ENCODE measurements at regions of chr17 and their contacts with region 1.

Region 1: DNA sequence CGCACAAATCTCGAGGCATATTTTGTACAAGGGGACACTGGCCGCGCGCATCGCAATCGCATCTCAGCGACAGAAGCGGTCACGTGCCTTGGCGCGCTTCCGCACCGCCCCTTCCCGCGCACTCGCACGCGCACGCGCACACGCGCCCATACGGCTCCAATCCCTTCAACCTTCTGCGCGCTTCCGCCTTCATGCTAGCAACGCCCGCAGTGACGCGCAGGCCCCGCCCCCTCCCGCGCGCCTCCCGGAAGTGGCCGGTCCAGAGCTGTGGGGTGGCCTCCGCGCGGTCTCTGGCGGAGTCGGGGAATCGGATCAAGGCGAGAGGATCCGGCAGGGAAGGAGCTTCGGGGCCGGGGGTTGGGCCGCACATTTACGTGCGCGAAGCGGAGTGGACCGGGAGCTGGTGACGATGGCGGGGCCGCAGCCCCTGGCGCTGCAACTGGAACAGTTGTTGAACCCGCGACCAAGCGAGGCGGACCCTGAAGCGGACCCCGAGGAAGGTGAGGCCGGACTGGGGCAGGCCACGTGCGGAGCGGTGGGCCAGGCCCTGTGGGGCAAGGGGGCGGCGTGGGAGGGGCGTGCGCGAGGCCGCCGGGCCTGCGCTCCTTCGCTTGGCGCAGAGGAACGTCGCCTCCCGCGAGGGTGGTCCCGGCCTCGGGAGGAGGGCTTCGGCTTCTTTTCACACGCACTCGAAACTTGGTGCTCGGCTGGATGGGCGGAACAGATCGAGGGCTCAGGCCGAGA is at the start of gene AATF:
- DNase-seq: peak; percentile 99
- ATAC-seq: peak; percentile 96 to 98 (median 97)
- H3K4me3 ChIP-seq: peak within 1 kb of the TSS; percentile 93
- H3K4me3 Mint-ChIP-seq: peak within 1 kb of the TSS; percentile 100
- H3K27ac ChIP-seq: peak within 1 kb of the TSS; percentile 88
- H3K27ac Mint-ChIP-seq: peak within 1 kb of the TSS; percentile 95 to 96
- H3K4me1 ChIP-seq: peaks cover 21% of the 10 kb centered on the region
- H3K4me1 Mint-ChIP-seq: peaks cover 53% of the 10 kb centered on the region in 2 donors
- H3K27me3 ChIP-seq: peaks cover 38% of the 10 kb centered on the region
- H3K27me3 Mint-ChIP-seq: peaks cover 28 to 32% of the 10 kb centered on the region in 2 donors
- CTCF ChIP-seq: no peak
- total RNA-seq, gene AATF: 60.1 to 67.2 (median 63.2) TPM

Region 2: GRCh38 chr17:36722121-36722902 is 226.6 kb before region 1 on chr17:
- intact Hi-C with region 1: loop called (anchors 10 kb)
- DNase-seq: peak; percentile 67 to 88
- ATAC-seq: peak; percentile 87 to 91 (median 89)
- H3K4me3 ChIP-seq: peak overlapping the region; percentile 47
- H3K4me3 Mint-ChIP-seq: peak overlapping the region; percentile 89
- H3K27ac ChIP-seq: peak overlapping the region; percentile 96
- H3K27ac Mint-ChIP-seq: peak overlapping the region; percentile 95 to 97
- H3K4me1 ChIP-seq: peaks cover 49% of the 10 kb centered on the region
- H3K4me1 Mint-ChIP-seq: peaks cover 67 to 74% of the 10 kb centered on the region in 2 donors
- H3K27me3 ChIP-seq: no peaks in the 10 kb centered on the region
- H3K27me3 Mint-ChIP-seq: no peaks in the 10 kb centered on the region
- CTCF ChIP-seq: no peak

Region 3: GRCh38 chr17:36907407-36907806 is 41.5 kb before region 1 on chr17:
- intact Hi-C with region 1: no loop called
- DNase-seq: no peak
- ATAC-seq: no peak
- H3K4me3 ChIP-seq: no peak overlapping the region
- H3K4me3 Mint-ChIP-seq: no peak overlapping the region
- H3K27ac ChIP-seq: no peak overlapping the region
- H3K27ac Mint-ChIP-seq: no peak overlapping the region
- H3K4me1 ChIP-seq: no peaks in the 10 kb centered on the region
- H3K4me1 Mint-ChIP-seq: no peaks in the 10 kb centered on the region
- H3K27me3 ChIP-seq: peaks cover 2% of the 10 kb centered on the region
- H3K27me3 Mint-ChIP-seq: peaks cover 30 to 33% of the 10 kb centered on the region in 2 donors
- CTCF ChIP-seq: no peak

Region 4: GRCh38 chr17:36934692-36935630 is 13.9 kb before region 1 on chr17:
- intact Hi-C with region 1: loop called (anchors 2 kb)
- DNase-seq: peak; percentile 38 to 58
- ATAC-seq: peak in 2 of 3 donors; percentile 35 to 50
- H3K4me3 ChIP-seq: no peak overlapping the region
- H3K4me3 Mint-ChIP-seq: peak overlapping the region; percentile 76
- H3K27ac ChIP-seq: no peak overlapping the region
- H3K27ac Mint-ChIP-seq: no peak overlapping the region
- H3K4me1 ChIP-seq: peaks cover 82% of the 10 kb centered on the region
- H3K4me1 Mint-ChIP-seq: peaks cover 52 to 78% of the 10 kb centered on the region in 2 donors
- H3K27me3 ChIP-seq: peaks cover 92% of the 10 kb centered on the region
- H3K27me3 Mint-ChIP-seq: peaks cover 73 to 81% of the 10 kb centered on the region in 2 donors
- CTCF ChIP-seq: no peak